Panc1 (cell line): ENCODE measurements at regions of chr10 and their contacts with region 1.

Region 1: DNA sequence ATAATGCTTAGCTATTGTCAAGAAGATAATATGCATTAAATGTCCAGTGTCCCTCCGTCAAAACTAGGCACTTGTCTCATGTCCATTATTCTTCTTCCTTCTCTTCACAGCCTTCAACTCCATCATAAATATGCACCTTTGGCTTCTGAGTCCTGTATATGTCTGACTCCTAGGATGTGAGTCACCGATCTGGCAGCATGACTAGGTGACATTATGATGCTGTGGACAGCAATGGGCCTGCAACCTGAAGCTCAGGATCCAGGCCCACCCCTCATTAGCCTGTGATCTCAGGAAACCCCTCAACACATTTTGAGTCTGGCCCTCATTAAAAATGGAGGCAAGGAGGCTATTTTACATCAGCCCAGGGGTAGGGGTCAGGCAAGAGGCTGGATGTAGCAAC is 362.5 kb upstream of the ZMIZ1 start:
- DNase-seq: peak; percentile 64
- ATAC-seq: peak; percentile 38; the same call in 1 of the 2 replicates
- H3K4me3 ChIP-seq: no peak overlapping the region
- H3K27ac ChIP-seq: no peak overlapping the region
- H3K4me1 ChIP-seq: no peaks in the 10 kb centered on the region
- H3K27me3 ChIP-seq: peaks cover 4% of the 10 kb centered on the region; the same call in 1 of the 2 replicates
- CTCF ChIP-seq: no peak

Region 2: DNA sequence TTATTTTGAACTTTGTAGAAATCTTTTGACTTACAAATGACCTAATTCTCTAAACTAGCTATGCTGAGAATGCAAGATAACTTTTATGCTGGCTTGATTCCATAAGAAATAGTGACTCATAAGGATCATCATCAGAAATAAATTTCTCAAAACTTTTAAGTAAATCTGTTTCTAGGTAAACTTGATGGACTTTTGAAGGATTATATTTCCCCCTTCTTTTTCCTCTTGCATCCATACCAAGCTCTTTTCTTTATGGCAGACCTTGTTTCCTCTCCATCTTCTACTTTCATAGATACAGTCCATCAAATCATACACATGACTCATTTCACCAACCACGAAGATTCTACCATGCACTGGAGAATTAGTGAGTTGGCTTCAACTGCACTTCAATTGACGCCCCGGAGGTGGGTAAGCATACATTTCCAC is 1404.9 kb before region 1 on chr10:
- CTCF ChIA-PET with region 1: no interaction called
- POLR2A ChIA-PET with region 1: interaction called, 11 read pairs
- in situ Hi-C with region 1: no loop called
- intact Hi-C with region 1: no loop called
- DNase-seq: no peak
- ATAC-seq: no peak
- H3K4me3 ChIP-seq: no peak overlapping the region
- H3K27ac ChIP-seq: no peak overlapping the region
- H3K4me1 ChIP-seq: peaks cover 18% of the 10 kb centered on the region
- H3K27me3 ChIP-seq: no peaks in the 10 kb centered on the region
- CTCF ChIP-seq: no peak

Region 3: DNA sequence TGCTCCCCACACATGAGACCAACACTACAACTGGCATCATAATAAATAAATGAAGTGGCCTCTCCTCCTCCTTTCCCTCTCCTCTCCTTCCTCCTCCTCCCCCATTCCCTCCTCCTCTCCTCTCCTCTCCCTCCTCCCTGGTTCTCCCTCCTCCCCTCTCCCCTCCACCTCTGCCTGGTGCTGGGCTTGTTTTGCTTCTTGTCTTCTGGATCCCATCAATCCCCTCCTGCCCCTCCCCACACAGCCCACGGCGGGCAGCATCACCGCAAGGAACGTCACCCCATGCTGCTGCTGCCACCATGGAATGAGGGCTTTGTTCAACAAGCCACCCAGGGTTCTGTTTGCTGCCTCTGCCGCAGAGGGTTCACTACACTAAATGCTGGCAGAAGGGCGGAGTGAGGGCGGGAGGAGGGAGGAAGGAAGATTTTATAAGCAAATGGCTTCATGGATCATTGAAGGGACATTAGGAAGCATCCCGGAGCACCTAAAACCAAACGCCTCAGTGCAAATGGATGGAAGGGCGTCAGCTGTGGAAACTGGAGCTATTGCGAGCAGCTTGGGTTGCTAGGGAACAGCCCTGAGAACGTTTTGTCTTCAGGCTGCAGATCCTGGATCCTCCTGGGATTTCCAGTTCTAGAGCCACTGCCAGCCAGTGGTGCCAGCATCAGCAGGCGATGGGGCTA is 17.2 kb before region 1 on chr10:
- CTCF ChIA-PET with region 1: no interaction called
- POLR2A ChIA-PET with region 1: interaction called, 19 read pairs
- in situ Hi-C with region 1: no loop called
- intact Hi-C with region 1: no loop called
- DNase-seq: no peak
- ATAC-seq: no peak
- H3K4me3 ChIP-seq: no peak overlapping the region
- H3K27ac ChIP-seq: no peak overlapping the region
- H3K4me1 ChIP-seq: no peaks in the 10 kb centered on the region
- H3K27me3 ChIP-seq: 0 out of 2 replicates have a peak, but pooled peaks cover under 1% of the 10 kb centered on the region
- CTCF ChIP-seq: no peak

Region 4: DNA sequence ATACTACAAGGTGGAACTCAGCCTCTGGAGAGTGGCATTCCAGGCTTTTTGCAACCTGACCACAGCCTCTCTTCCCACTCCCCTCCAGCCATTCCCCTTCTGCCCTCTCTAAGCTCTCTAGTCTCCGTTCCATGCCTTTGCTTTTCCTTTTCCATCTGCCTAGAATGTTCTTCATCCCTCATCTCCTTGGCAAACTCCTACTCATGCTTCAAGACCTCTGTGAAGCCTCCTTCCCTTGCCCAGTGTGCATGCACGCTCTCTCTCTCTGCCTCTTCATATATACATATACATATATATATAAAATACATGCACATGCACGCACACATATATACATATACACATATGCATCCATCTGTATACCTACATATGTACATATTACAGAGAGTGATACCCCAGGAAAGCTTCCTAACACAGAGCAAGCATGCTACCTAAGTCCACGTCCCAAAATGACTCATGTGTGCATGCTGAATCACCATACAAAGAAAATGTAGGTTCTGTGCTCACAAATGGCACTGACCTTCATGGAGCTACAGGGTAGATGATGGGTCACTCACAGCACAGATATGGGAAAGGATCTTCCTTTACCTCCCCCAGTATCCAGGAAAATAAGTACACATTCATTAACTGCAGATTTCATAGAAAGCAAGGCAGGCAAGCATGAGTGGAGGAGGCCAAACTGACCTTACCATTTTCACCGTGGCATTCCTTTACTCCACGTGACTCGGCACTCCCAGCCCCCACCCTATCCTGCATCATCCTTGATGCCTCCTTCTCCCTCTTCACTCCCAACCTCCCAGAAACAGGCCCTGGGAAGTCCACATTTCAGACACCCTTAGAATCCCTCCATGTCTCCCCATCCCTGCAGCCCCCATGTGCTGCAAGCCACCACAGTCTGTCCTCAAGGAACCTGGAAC is 124.1 kb after region 1 on chr10:
- CTCF ChIA-PET with region 1: no interaction called
- POLR2A ChIA-PET with region 1: no interaction called
- in situ Hi-C with region 1: no loop called
- intact Hi-C with region 1: no loop called
- DNase-seq: no peak
- ATAC-seq: no peak
- H3K4me3 ChIP-seq: no peak overlapping the region
- H3K27ac ChIP-seq: no peak overlapping the region
- H3K4me1 ChIP-seq: no peaks in the 10 kb centered on the region
- H3K27me3 ChIP-seq: 0 out of 2 replicates have a peak, but pooled peaks cover 3% of the 10 kb centered on the region
- CTCF ChIP-seq: no peak

Region 5: GRCh38 chr10:79178614-79179163 is 472.4 kb after region 1 on chr10:
- CTCF ChIA-PET with region 1: no interaction called
- POLR2A ChIA-PET with region 1: no interaction called
- in situ Hi-C with region 1: no loop called
- intact Hi-C with region 1: no loop called
- DNase-seq: no peak
- ATAC-seq: no peak; the same call in 1 of the 2 replicates
- H3K4me3 ChIP-seq: no peak overlapping the region
- H3K27ac ChIP-seq: no peak overlapping the region
- H3K4me1 ChIP-seq: peaks cover 40% of the 10 kb centered on the region
- H3K27me3 ChIP-seq: no peaks in the 10 kb centered on the region
- CTCF ChIP-seq: no peak